ENCODE measurements at regions of chr4 and their contacts with region 1.

Region 1: GRCh38 chr4:163494360-163495162 is at the start of gene TMA16:
- DNase-seq: peak; percentile 85
- ATAC-seq: peak; percentile 91
- H3K4me3 Mint-ChIP-seq: peak within 1 kb of the TSS; percentile 96
- H3K27ac Mint-ChIP-seq: peak within 1 kb of the TSS; percentile 94
- H3K4me1 Mint-ChIP-seq: peaks cover 19% of the 10 kb centered on the region
- H3K27me3 Mint-ChIP-seq: peaks cover 9% of the 10 kb centered on the region
- total RNA-seq, gene TMA16: 27.3 to 29.5 TPM

Region 2: DNA sequence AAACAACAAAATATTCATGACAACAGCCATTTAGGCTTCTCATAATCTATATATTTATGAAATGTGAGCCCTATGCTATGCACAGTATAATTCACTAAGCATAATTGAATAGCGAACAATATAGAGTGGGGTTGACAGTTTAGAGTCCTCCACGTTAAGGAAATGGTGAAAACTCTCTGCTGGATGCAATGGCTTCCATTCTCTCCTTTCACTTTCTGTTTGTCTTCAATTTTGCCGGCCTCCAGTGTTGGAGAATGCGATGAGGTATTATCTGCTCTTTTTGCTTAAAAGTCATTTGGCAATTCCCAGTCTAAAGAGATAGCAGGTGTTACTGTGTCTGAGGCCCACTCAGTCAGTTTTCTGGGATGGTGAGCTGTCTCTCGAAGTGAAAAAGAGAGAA is 98.8 kb before region 1 on chr4:
- POLR2A ChIA-PET with region 1: no interaction called
- DNase-seq: no peak
- ATAC-seq: no peak
- H3K4me3 Mint-ChIP-seq: peak overlapping the region; percentile 8
- H3K27ac Mint-ChIP-seq: no peak overlapping the region
- H3K4me1 Mint-ChIP-seq: peaks cover 2% of the 10 kb centered on the region
- H3K27me3 Mint-ChIP-seq: no peaks in the 10 kb centered on the region

Region 3: GRCh38 chr4:163473576-163473975 is 21.0 kb before region 1 on chr4 and contains the start of gene TKTL2:
- POLR2A ChIA-PET with region 1: no interaction called
- DNase-seq: no peak
- ATAC-seq: no peak
- H3K4me3 Mint-ChIP-seq: no peak within 1 kb of the TSS
- H3K27ac Mint-ChIP-seq: no peak within 1 kb of the TSS
- H3K4me1 Mint-ChIP-seq: no peaks in the 10 kb centered on the region
- H3K27me3 Mint-ChIP-seq: peaks cover 12% of the 10 kb centered on the region
- total RNA-seq, gene TKTL2: not detected

Region 4: DNA sequence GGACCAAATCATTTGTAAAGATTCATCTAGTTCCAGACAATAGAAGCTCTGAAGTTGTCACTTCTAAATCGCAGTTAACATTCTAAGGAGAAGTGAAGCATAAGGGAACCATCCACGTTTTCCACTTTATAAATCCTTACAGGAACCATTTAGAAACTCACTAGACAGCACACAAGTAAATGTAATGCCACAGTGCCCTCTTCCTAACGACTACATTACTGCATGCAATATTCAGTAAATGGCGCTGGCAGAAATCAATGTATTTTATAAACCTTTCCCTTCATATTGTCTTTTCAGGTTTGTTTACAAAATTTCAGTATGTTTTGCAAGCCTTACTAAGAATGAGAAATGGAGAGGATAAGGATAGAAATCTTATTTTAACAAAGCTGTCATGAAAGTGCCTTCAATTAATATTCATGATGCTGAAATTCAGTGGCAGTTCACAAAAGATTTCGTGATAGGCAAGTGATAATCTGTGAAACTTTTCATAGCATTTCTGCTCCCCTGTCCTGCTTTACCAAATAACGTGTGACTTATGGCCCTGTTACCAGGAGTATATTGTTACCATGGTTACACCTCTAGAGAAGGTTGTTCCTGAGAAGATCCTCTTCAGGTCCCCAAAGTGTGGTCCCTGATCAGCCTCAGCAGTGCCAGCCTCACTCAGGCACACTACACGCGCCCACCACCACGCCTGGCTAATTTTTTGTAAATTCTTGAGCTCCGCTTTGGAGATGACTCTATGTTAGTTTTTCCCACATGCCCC is 54.1 kb after region 1 on chr4:
- POLR2A ChIA-PET with region 1: interaction called, 11 read pairs
- DNase-seq: no peak
- ATAC-seq: peak; percentile 23
- H3K4me3 Mint-ChIP-seq: no peak overlapping the region
- H3K27ac Mint-ChIP-seq: no peak overlapping the region
- H3K4me1 Mint-ChIP-seq: peaks cover 6% of the 10 kb centered on the region
- H3K27me3 Mint-ChIP-seq: no peaks in the 10 kb centered on the region

Measured in activated naive CD8-positive, alpha-beta T cell treated with anti-CD3 and anti-CD28 coated beads, Interleukin-2, amount 10 ng/mL, durations not matched to agents 7 days and 5 days (primary cell).